Activated CD4-positive, alpha-beta T cell treated with anti-CD3 and anti-CD28 coated beads for 36 hours (primary cell): ENCODE measurements at regions of chr11 and their contacts with region 1.

Region 1: DNA sequence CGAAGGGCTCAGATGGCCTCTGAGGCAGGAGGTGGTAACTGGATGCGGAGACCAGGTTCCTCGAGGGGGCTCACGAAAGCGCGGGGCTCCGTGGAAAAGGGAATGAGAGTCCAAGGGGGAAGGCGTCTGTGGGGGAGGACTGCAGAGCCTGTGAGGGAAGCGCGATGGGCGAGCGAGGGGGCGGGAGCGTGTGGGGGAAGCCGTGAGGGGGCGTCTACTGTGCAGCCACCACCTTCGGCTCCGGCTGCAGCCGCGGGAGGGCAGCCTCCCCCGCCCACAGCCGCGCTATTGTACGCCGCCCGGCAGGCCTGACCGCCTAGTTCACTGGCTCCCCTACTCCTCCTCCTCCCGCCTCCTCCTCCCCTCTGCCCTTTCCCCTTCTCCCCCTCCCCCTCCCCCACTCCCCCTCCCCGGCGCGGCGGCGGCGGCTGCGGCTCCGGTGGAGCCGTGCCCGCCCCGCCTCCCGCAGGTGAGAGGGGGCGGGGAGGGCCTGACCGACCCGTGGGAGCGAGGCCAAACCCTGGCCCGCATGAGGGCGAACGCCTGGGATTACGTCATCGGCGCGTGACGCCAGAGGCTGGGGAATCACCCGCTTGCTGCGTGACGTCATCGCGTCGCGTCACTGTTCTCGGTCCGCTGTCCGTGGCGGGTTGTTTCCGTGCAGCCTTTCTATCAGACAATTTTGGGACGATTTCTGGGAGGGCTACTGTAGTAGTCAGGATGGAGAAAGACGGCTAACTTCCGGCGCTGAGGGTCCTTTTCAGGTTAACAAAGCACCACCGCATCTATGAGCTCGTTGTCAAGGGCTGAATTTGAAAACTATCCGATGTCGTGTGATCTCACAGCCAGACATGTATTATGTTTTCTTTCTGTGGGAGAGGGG is at the start of gene PAK1:
- DNase-seq: peak; percentile 94
- ATAC-seq: peak; percentile 75
- H3K4me3 Mint-ChIP-seq: peak within 1 kb of the TSS; percentile 75
- H3K27ac Mint-ChIP-seq: peak within 1 kb of the TSS; percentile 77
- H3K4me1 Mint-ChIP-seq: peaks cover 4% of the 10 kb centered on the region
- H3K27me3 Mint-ChIP-seq: peaks cover 15% of the 10 kb centered on the region
- total RNA-seq, gene PAK1: 38.2 to 43.9 TPM

Region 2: DNA sequence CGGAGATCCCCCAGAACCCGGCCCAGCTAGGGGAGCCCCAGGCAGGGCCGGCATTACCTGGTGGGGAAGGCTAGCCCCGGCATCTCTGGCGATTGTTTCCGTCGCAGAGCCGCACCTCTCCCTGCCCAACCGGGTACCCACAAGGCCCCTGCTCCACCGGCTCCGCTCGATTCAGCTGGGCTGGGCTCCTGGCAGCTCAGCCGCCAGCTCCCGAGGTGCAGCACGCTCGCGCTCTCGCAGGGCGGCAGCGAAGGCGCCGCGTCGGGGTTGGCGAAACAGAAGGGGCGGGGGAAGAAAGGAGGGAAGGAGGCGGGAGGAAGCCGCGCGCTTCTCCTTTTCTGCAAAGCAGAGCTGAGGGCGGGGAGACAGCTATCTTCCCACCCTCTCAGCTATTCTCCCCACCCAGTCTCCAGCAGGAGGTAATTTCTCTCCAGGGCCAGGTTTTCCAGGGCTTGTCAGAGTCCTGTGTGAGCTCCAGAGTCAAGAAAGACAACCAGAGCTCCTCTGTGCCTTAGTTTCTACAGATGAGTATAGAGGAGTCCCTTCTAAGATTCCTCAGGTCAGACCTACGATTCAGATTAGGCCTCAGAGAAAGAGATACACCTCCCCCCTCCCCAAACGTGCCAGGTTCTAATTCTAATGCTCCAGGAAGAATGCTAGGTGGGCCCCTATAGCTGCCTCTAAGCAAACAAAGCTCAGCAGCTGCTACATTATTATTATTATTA is 62.2 kb before region 1 on chr11:
- CTCF ChIA-PET with region 1: interaction called, 6 read pairs
- POLR2A ChIA-PET with region 1: no interaction called
- intact Hi-C with region 1: loop called (anchors 1 to 5 kb)
- DNase-seq: peak; percentile 91
- ATAC-seq: peak; percentile 98
- H3K4me3 Mint-ChIP-seq: peak overlapping the region; percentile 76
- H3K27ac Mint-ChIP-seq: peak overlapping the region; percentile 79
- H3K4me1 Mint-ChIP-seq: peaks cover 30% of the 10 kb centered on the region
- H3K27me3 Mint-ChIP-seq: no peaks in the 10 kb centered on the region

Region 3: DNA sequence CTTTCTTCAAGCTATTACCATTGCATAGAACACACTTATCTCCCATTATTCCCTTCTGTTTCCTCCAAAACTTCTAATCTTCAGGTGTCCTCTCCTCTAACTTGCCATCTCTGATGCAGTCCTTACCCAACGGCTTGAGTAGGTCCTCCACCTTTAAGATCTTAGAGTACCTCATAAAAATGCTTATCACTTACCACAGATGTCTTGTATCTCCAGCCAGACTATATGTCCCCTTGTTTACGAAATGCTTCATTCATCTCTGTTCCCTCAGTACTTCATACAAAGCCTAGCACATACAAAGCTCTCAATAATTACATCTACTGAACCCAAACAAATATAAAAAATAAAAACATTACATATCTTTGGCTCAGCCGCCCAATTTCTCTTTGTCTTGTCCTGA is 49.4 kb before region 1 on chr11:
- CTCF ChIA-PET with region 1: no interaction called
- POLR2A ChIA-PET with region 1: no interaction called
- intact Hi-C with region 1: no loop called
- DNase-seq: no peak
- ATAC-seq: no peak
- H3K4me3 Mint-ChIP-seq: no peak overlapping the region
- H3K27ac Mint-ChIP-seq: no peak overlapping the region
- H3K4me1 Mint-ChIP-seq: no peaks in the 10 kb centered on the region
- H3K27me3 Mint-ChIP-seq: no peaks in the 10 kb centered on the region

Region 4: DNA sequence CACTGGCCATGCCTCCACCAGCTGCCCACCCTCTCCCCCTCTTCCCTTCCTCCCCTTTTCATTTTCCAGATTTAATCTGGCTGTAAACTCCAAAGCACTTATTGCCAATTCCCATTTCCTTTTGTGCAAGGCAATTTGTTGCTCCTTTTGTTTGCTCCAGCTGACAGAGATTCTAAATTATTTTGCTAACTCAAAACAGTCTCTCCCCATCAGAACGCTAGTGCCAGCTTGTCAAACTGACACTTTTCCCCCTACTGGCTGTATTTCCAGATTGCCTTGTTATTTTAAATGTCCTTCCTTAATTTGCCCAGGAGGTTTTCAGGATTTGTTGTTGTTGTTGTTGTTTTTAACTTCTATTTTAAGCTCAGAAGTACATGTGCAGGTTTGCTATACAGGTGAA is 56.8 kb after region 1 on chr11:
- CTCF ChIA-PET with region 1: no interaction called
- POLR2A ChIA-PET with region 1: no interaction called
- intact Hi-C with region 1: no loop called
- DNase-seq: no peak
- ATAC-seq: no peak
- H3K4me3 Mint-ChIP-seq: no peak overlapping the region
- H3K27ac Mint-ChIP-seq: no peak overlapping the region
- H3K4me1 Mint-ChIP-seq: no peaks in the 10 kb centered on the region
- H3K27me3 Mint-ChIP-seq: no peaks in the 10 kb centered on the region